Left lung (tissue), 14 donors: ENCODE measurements at regions of chr7 and their contacts with region 1.

Region 1: DNA sequence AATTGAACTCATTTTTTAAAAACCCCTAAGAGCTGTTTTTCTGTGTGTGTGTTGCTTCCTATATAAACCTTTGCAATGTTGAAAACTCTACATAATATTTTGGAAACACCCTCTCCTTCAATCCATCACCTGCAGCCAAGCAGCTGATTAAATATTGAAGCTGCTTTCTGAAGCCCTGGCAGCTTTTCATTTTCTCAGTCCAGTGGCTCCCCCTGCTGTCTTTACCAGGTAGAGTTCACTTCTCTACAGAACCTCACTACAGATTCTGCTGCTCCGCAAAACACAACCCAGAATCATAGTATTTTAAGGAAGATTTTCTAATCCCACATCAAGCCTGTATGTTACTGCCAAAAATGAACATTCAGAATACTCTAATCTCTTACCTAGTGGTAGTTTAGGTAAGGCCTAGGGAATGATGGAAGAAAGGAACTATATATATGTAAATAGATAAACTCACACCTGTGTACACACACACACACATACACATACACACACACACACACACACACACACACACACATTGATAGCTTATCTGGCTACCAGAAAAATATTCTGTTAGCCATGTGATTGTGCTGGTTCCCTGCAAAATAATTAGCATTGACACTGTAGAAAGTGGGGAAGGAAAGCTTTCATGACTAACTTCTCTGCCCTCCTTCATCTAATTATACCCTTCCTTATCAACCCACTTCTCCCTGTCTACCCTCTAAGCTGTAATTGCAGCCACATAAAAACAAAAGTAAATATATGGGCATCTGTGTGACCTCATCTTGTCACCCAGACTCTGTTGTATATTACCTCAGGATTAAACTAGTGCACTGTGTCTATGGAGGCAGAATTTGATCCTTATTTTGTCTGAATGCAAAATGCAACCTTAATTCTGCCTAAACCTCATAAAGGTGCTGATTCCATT is 229.5 kb upstream of the FZD1 start:
- DNase-seq: peak in 1 of 4 donors; percentile 68
- ATAC-seq: peak; percentile 74
- H3K4me3 ChIP-seq: no peak overlapping the region
- H3K27ac ChIP-seq: no peak overlapping the region
- H3K4me1 ChIP-seq: no peaks in the 10 kb centered on the region
- H3K27me3 ChIP-seq: no peaks in the 10 kb centered on the region
- CTCF ChIP-seq: peak; percentile 35 to 38

Region 2: GRCh38 chr7:90552521-90552920 is 482.2 kb before region 1 on chr7:
- intact Hi-C with region 1: loop called in 1 of 2 experiments (anchors 10 kb)
- DNase-seq: peak in 1 of 4 donors; percentile 10
- ATAC-seq: peak; percentile 43
- H3K4me3 ChIP-seq: no peak overlapping the region
- H3K27ac ChIP-seq: no peak overlapping the region
- H3K4me1 ChIP-seq: no peaks in the 10 kb centered on the region
- H3K27me3 ChIP-seq: no peaks in the 10 kb centered on the region
- CTCF ChIP-seq: peak in 1 of 2 donors; percentile 36